Activated T-helper 1 cell treated with anti-CD3 and anti-CD28 coated beads, Interleukin-12 subunit alpha, Interleukin-12 subunit beta, Interleukin-2, Interleukin-4 antibody, amounts not matched to agents 30 ng/mL and 10 ng/mL and 1 ng/mL, durations not matched to agents 14 hours and 24 hours and 36 hours (primary cell): ENCODE measurements at regions of chr5 and their contacts with region 1.

Region 1: DNA sequence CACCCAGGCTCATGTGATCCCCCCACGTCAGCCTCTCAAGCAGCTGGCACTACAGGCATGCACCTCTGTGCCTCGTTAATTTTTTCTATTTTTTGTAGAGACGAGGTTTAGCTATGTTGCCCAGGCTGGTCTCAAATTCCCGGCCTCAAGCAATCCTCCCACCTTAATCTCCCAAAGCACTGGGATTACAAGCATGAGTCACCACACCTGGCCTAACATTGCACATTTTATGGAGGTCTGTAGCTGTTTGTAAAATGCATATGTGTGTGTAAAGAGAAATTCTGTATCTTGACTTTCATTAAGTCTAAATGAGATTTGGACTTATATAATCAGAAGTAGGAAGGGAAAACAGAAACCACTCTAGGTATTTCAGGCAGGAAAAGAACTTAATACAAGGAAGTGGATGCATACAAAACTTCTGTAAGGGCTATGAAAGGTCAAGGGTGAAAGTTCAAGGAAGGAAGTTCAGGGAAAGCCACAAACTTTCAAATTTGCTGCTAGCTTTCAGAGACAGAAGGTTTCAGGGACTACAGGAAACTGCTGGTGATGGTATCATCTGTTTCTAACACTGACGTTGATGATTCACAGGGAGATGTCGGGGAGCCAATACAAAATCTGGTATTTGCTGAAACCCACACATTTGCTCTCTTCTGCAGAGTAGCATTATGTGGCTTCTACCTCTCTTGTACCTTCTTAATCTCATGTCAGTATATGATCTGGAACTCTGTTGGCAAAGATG is 209.4 kb downstream of the PIK3R1 start:
- DNase-seq: peak; percentile 20
- H3K4me3 Mint-ChIP-seq: peak overlapping the region; percentile 6
- H3K27ac Mint-ChIP-seq: peak overlapping the region; percentile 19
- H3K4me1 Mint-ChIP-seq: peaks cover 46% of the 10 kb centered on the region
- H3K27me3 Mint-ChIP-seq: peaks cover 5% of the 10 kb centered on the region

Region 2: GRCh38 chr5:68369457-68370125 is 55.4 kb before region 1 on chr5:
- intact Hi-C with region 1: loop called (anchors 1 kb)
- DNase-seq: peak; percentile 48
- H3K4me3 Mint-ChIP-seq: peak overlapping the region; percentile 46
- H3K27ac Mint-ChIP-seq: peak overlapping the region; percentile 79
- H3K4me1 Mint-ChIP-seq: peaks cover 61% of the 10 kb centered on the region
- H3K27me3 Mint-ChIP-seq: peaks cover 1% of the 10 kb centered on the region

Region 3: DNA sequence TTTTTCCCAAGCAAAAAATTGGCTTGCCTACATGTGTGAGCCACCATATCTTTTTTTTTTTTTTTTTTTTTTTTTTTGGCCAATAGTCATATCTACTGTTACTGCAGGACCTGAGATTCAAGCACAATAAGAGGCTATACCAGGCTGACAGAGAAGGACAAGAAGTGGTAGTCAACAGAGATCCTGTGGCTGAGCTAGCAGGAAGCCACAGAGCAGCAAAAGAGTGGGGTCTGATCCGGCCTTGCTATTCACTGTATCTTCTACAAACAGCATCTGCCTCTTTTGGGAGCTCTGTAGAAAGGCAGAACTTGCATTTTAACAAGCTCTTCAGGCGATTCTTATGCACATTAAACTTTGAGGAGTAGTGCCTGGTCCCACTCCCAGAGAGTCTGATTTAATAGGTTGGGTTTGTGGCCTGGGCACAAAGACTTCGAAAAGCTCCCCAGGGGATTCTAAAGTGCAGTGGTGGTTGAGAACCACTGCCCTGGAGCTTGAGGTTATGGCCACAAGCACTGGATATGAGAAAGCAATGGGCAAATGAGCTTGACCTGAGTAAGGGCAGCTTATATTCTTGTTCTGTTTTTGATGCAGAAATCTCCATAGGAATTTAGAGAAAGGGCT is 46.7 kb before region 1 on chr5:
- intact Hi-C with region 1: loop called (anchors 1 kb)
- DNase-seq: no peak
- H3K4me3 Mint-ChIP-seq: no peak overlapping the region
- H3K27ac Mint-ChIP-seq: peak overlapping the region; percentile 14
- H3K4me1 Mint-ChIP-seq: peaks cover 58% of the 10 kb centered on the region
- H3K27me3 Mint-ChIP-seq: no peaks in the 10 kb centered on the region

Region 4: DNA sequence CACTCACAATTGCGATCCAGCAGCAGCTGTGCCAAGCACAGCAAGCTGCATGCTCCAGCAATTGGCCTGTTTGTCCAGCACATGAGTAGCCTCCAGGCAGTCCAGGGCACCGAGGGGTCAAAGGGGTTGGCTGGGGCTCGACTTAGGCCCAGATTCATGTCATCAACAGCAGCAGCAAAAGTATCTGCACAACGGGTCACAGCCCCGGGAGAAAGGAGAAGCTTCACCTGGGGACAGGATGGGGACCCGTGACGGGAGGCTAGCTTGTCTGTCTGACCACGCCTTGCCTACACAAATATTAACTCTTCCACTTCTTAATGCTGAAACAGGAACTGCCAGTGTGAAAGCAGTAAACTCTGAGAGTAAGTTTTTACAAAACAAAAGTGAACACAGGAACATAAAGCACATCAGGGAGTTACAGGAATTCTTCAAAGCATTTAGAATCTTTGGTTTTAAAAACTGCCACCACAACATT is 18.2 kb before region 1 on chr5:
- intact Hi-C with region 1: loop called (anchors 1 kb)
- DNase-seq: no peak
- H3K4me3 Mint-ChIP-seq: peak overlapping the region; percentile 47
- H3K27ac Mint-ChIP-seq: peak overlapping the region; percentile 81
- H3K4me1 Mint-ChIP-seq: peaks cover 30% of the 10 kb centered on the region
- H3K27me3 Mint-ChIP-seq: peaks cover 2% of the 10 kb centered on the region

Region 5: GRCh38 chr5:68441309-68442073 is 16.5 kb after region 1 on chr5:
- intact Hi-C with region 1: loop called (anchors 1 kb)
- DNase-seq: peak; percentile 15
- H3K4me3 Mint-ChIP-seq: peak overlapping the region; percentile 27
- H3K27ac Mint-ChIP-seq: peak overlapping the region; percentile 76
- H3K4me1 Mint-ChIP-seq: peaks cover 33% of the 10 kb centered on the region
- H3K27me3 Mint-ChIP-seq: peaks cover 14% of the 10 kb centered on the region

Region 6: GRCh38 chr5:69265931-69266330 is 841.0 kb after region 1 on chr5:
- intact Hi-C with region 1: no loop called
- DNase-seq: no peak
- H3K4me3 Mint-ChIP-seq: no peak overlapping the region
- H3K27ac Mint-ChIP-seq: no peak overlapping the region
- H3K4me1 Mint-ChIP-seq: no peaks in the 10 kb centered on the region
- H3K27me3 Mint-ChIP-seq: no peaks in the 10 kb centered on the region